WTC11 (cell line): ENCODE measurements at regions of chr19 and their contacts with region 1.

Region 1: GRCh38 chr19:49570138-49570856 is 10.1 kb downstream of the NOSIP start:
- DNase-seq: peak; percentile 62
- ATAC-seq: peak; percentile 78
- H3K4me3 Mint-ChIP-seq: peak overlapping the region; percentile 3; the same call in 1 of the 2 replicates
- H3K27ac Mint-ChIP-seq: peak overlapping the region; percentile 76
- H3K4me1 Mint-ChIP-seq: peaks cover 14% of the 10 kb centered on the region
- H3K27me3 Mint-ChIP-seq: no peaks in the 10 kb centered on the region
- CTCF ChIP-seq: peak; percentile 93

Region 2: GRCh38 chr19:49502866-49503581 is 67.3 kb before region 1 on chr19:
- CTCF ChIA-PET with region 1: interaction called, 58 read pairs
- POLR2A ChIA-PET with region 1: no interaction called
- DNase-seq: no peak
- ATAC-seq: no peak
- H3K4me3 Mint-ChIP-seq: no peak overlapping the region
- H3K27ac Mint-ChIP-seq: no peak overlapping the region
- H3K4me1 Mint-ChIP-seq: peaks cover 31% of the 10 kb centered on the region
- H3K27me3 Mint-ChIP-seq: no peaks in the 10 kb centered on the region; the same call in 1 of the 2 replicates
- CTCF ChIP-seq: peak; percentile 29; the same call in 1 of the 2 replicates

Region 3: GRCh38 chr19:49528211-49528771 is 42.0 kb before region 1 on chr19:
- CTCF ChIA-PET with region 1: interaction called, 34 read pairs
- POLR2A ChIA-PET with region 1: no interaction called
- DNase-seq: peak; percentile 26
- ATAC-seq: peak; percentile 25; the same call in 1 of the 2 replicates
- H3K4me3 Mint-ChIP-seq: peak overlapping the region; percentile 70
- H3K27ac Mint-ChIP-seq: no peak overlapping the region
- H3K4me1 Mint-ChIP-seq: peaks cover 21% of the 10 kb centered on the region
- H3K27me3 Mint-ChIP-seq: peaks cover 19% of the 10 kb centered on the region
- CTCF ChIP-seq: no peak

Region 4: GRCh38 chr19:49546825-49547565 is 23.3 kb before region 1 on chr19:
- CTCF ChIA-PET with region 1: interaction called, 62 read pairs
- POLR2A ChIA-PET with region 1: no interaction called
- DNase-seq: peak; percentile 71
- ATAC-seq: peak; percentile 83
- H3K4me3 Mint-ChIP-seq: peak overlapping the region; percentile 52
- H3K27ac Mint-ChIP-seq: peak overlapping the region; percentile 67
- H3K4me1 Mint-ChIP-seq: peaks cover 4% of the 10 kb centered on the region
- H3K27me3 Mint-ChIP-seq: no peaks in the 10 kb centered on the region
- CTCF ChIP-seq: peak; percentile 72

Region 5: GRCh38 chr19:49580264-49581006 is 10.1 kb after region 1 on chr19 and contains the start of gene NOSIP:
- CTCF ChIA-PET with region 1: interaction called, 53 read pairs
- POLR2A ChIA-PET with region 1: interaction called, 6 read pairs
- DNase-seq: peak; percentile 96
- ATAC-seq: peak; percentile 76
- H3K4me3 Mint-ChIP-seq: peak within 1 kb of the TSS; percentile 99
- H3K27ac Mint-ChIP-seq: peak within 1 kb of the TSS; percentile 95
- H3K4me1 Mint-ChIP-seq: peaks cover 28% of the 10 kb centered on the region
- H3K27me3 Mint-ChIP-seq: no peaks in the 10 kb centered on the region; the same call in 1 of the 2 replicates
- CTCF ChIP-seq: no peak
- total RNA-seq, gene NOSIP: 82.3 to 97.9 TPM (median 87.6 TPM) in 3 replicates

Region 6: DNA sequence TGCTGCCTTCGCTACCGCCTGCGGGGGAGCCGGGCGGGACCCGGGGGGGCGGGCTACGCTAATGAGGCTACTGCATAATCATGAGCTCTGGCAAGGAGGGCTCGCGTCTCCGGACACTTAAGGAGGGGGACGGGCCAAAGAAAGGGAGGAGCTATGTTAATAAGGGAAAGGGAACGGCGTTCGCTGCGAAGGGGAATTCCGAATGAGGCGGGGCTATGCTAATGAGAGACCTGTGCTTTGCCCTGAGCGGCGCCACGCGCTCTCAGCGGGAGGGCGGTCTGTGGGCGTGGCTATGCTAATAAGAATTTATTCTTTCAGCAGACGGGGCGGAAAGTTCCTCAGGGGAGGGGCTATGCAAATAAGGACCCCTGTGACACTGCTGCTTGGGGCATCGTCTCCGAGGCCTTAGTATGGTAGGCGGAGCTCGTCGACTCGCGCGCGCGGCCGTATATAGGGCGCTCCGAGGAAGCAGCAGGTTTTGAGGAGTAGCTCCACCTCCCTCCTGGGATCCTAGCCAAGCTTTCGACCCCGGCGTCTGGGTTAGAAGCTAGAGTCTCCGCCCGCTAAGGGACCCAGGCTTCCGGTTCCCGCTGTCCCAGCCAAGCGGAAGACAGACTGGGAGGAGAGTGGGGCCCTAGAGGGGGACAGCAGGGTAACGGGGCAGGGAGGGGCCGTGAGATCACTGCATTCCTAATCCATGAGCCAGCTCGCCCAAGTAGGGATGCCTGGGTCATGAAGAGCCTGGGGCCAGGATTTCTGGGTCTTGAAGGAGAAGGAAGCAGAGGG is 70.0 kb after region 1 on chr19 and contains the start of gene RRAS:
- CTCF ChIA-PET with region 1: interaction called, 21 read pairs
- POLR2A ChIA-PET with region 1: interaction called, 4 read pairs
- DNase-seq: peak; percentile 100
- ATAC-seq: peak; percentile 76
- H3K4me3 Mint-ChIP-seq: peak within 1 kb of the TSS; percentile 99
- H3K27ac Mint-ChIP-seq: peak within 1 kb of the TSS; percentile 99
- H3K4me1 Mint-ChIP-seq: peaks cover 62% of the 10 kb centered on the region
- H3K27me3 Mint-ChIP-seq: peaks cover 32% of the 10 kb centered on the region
- CTCF ChIP-seq: no peak
- total RNA-seq, gene RRAS: 11.4 to 17.9 TPM (median 15.7 TPM) in 3 replicates